ENCODE measurements at regions of chr16 and their contacts with region 1.

Region 1: GRCh38 chr16:46607529-46607928 is 13.7 kb downstream of the SHCBP1 start:
- DNase-seq: no peak
- H3K4me3 ChIP-seq: no peak overlapping the region
- H3K27ac ChIP-seq: no peak overlapping the region
- H3K4me1 ChIP-seq: no peaks in the 10 kb centered on the region
- H3K27me3 ChIP-seq: no peaks in the 10 kb centered on the region
- CTCF ChIP-seq: peak; percentile 38

Region 2: GRCh38 chr16:46555951-46556350 is 51.6 kb before region 1 on chr16:
- intact Hi-C with region 1: loop called (anchors 10 kb)
- DNase-seq: no peak
- H3K4me3 ChIP-seq: no peak overlapping the region
- H3K27ac ChIP-seq: no peak overlapping the region
- H3K4me1 ChIP-seq: no peaks in the 10 kb centered on the region
- H3K27me3 ChIP-seq: no peaks in the 10 kb centered on the region
- CTCF ChIP-seq: no peak

Measured in colonic mucosa (tissue), 4 donors.